ENCODE measurements at regions of chr17 and their contacts with region 1.

Region 1: GRCh38 chr17:76121932-76122430 is 18.4 kb upstream of the EXOC7 start:
- DNase-seq: peak in 2 of 5 donors; percentile 45 to 48
- H3K4me3 ChIP-seq: peak overlapping the region; percentile 19
- H3K27ac ChIP-seq: no peak overlapping the region
- H3K4me1 ChIP-seq: peaks cover 2% of the 10 kb centered on the region
- H3K27me3 ChIP-seq: no peaks in the 10 kb centered on the region
- CTCF ChIP-seq: no peak
- EP300 ChIP-seq: no peak
- POLR2A ChIP-seq: no peak

Region 2: DNA sequence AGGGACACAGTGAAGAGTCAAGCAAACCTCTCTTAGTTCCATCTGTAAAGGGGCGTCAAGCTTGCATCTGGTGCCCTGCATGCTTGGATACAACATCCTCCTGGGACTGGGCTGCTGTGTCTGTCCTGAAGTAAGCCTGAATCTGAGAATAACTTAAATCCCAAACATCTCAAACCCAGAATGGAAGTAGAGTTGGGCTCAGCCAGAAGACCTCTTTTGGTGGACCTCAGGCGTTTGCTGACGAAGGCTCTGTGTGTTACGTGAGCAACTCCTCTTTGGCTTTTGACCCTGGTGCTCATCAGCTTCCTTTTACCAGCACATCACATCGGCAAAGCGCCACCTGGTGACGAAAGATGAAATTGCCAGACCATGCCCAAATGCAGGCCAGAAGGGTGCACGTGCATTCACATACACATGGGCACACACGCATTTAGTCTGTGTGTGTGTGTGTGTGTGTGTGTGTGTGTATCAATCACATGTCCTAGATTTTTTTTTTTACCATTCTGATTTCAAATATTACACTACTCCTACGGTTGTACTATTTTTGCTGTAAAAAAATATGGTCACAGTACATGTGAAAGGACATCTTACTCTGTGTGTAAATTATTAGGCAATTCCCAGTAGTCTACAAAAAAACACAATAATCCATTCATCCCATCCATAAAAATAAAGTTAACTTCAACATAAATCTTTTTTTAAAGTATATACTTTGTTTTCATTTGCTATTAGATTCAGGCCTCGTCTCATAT is 60.2 kb after region 1 on chr17:
- intact Hi-C with region 1: loop called in 3 of 4 experiments (anchors 2 to 10 kb)
- DNase-seq: peak; percentile 79 to 93 (median 89)
- H3K4me3 ChIP-seq: no peak overlapping the region
- H3K27ac ChIP-seq: no peak overlapping the region
- H3K4me1 ChIP-seq: no peaks in the 10 kb centered on the region
- H3K27me3 ChIP-seq: no peaks in the 10 kb centered on the region
- CTCF ChIP-seq: peak; percentile 51 to 88 (median 84)
- EP300 ChIP-seq: no peak
- POLR2A ChIP-seq: no peak

Region 3: DNA sequence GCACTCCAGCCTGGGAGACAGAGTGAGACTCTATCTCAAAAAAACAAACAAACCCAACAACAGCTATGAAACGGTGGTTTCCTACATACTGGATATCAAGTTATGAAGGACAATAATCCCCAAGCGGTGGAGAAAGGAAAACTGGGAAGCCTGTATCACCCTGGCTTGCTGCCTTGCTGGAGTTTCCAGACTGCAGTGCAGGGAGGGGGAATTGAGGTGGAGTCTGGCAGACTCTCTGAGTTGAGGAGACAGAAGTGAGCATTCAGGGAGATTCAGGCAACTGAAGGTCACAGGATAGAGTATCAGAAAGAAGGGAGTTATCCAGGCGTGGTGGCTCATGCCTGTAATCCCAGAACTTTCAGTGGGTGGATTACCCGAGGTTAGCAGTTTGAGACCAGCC is 174.2 kb after region 1 on chr17:
- intact Hi-C with region 1: loop called in 1 of 4 experiments (anchors 5 kb)
- DNase-seq: peak in 2 of 5 donors; percentile 36 to 41
- H3K4me3 ChIP-seq: no peak overlapping the region
- H3K27ac ChIP-seq: no peak overlapping the region
- H3K4me1 ChIP-seq: no peaks in the 10 kb centered on the region
- H3K27me3 ChIP-seq: no peaks in the 10 kb centered on the region
- CTCF ChIP-seq: peak in 1 of 3 donors; percentile 19
- EP300 ChIP-seq: no peak
- POLR2A ChIP-seq: no peak